ENCODE measurements at regions of chr1 and their contacts with region 1.

Region 1: DNA sequence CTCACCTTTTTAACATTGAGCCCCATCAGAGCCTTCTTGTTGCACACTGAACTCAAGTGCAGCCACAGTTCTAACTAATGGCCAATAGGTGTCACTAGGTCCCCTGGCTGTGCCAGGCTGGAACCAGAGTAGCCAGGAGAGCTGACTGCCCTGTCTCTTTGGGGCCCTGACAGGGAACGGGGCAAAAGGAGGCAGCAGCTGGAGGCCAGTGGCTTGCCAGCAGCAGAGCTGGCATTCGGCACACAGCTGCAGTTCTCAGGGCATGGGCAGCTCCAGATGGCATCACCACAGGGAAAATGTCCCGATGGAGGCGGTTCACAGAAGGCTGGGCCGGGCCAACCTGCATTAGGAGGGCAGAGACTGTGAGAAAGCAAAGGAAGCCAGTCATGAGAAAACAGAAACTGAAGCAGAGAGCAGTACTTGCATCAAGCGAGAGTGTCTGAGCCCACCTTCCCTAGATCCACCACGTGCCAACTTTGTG is 188.6 kb downstream of the FCRL5 start:
- DNase-seq: peak; percentile 20
- ATAC-seq: peak; percentile 98
- H3K4me3 ChIP-seq: no peak overlapping the region
- H3K27ac ChIP-seq: no peak overlapping the region; the same call in 1 of the 2 replicates
- H3K4me1 ChIP-seq: peaks cover 11% of the 10 kb centered on the region
- H3K27me3 ChIP-seq: no peaks in the 10 kb centered on the region
- CTCF ChIP-seq: peak; percentile 57 to 72 (median 70)
- EP300 ChIP-seq: no peak
- POLR2A ChIP-seq: no peak
- RAD21 ChIP-seq: peak; percentile 49; the same call in 1 of the 2 replicates

Region 2: DNA sequence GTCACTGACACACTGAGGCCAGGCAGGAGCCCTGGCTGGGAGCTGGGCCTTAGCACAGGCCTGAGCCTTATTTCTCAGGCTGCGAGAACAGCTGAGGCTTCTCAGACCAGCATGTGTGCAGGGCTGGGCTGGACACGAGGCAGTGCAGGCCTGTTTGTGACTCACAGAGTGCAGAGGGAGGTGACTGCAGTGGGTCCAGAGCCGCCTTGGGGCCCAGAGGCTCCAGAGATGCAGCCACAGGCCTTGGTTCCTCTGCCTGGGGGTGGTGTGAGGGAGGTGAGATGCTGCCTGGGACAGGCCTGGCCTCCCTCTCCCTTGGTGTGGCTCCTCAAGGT is 164.3 kb before region 1 on chr1:
- CTCF ChIA-PET with region 1: interaction called, 44 read pairs
- POLR2A ChIA-PET with region 1: no interaction called
- RAD21 ChIA-PET with region 1: interaction called, 3 read pairs
- SMC1A ChIA-PET with region 1: interaction called, 13 read pairs
- in situ Hi-C with region 1: loop called (anchors 5 kb)
- intact Hi-C with region 1: no loop called
- DNase-seq: no peak
- ATAC-seq: no peak; the same call in 1 of the 3 replicates
- H3K4me3 ChIP-seq: no peak overlapping the region
- H3K27ac ChIP-seq: no peak overlapping the region
- H3K4me1 ChIP-seq: no peaks in the 10 kb centered on the region
- H3K27me3 ChIP-seq: no peaks in the 10 kb centered on the region
- CTCF ChIP-seq: no peak
- EP300 ChIP-seq: no peak
- POLR2A ChIP-seq: no peak
- RAD21 ChIP-seq: no peak

Measured in GM12878 (cell line).